ENCODE measurements at regions of chr11 and their contacts with region 1.

Region 1: GRCh38 chr11:94128746-94129511 is at the start of gene PANX1:
- DNase-seq: peak; percentile 85
- ATAC-seq: peak; percentile 80
- H3K4me3 ChIP-seq: peak within 1 kb of the TSS; percentile 88
- H3K27ac ChIP-seq: peak within 1 kb of the TSS; percentile 90
- H3K4me1 ChIP-seq: peaks cover 18% of the 10 kb centered on the region
- H3K27me3 ChIP-seq: no peaks in the 10 kb centered on the region
- CTCF ChIP-seq: no peak
- POLR2A ChIP-seq: peak; percentile 81
- RAD21 ChIP-seq: no peak
- total RNA-seq, gene PANX1: 70.3 and 70.8 TPM in 2 replicates

Region 2: GRCh38 chr11:93921695-93922468 is 207.0 kb before region 1 on chr11:
- CTCF ChIA-PET with region 1: no interaction called
- POLR2A ChIA-PET with region 1: no interaction called
- dilution Hi-C with region 1: no loop called
- in situ Hi-C with region 1: no loop called
- intact Hi-C with region 1: loop called (anchors 2 kb)
- DNase-seq: peak; percentile 72
- ATAC-seq: peak; percentile 96
- H3K4me3 ChIP-seq: no peak overlapping the region
- H3K27ac ChIP-seq: no peak overlapping the region
- H3K4me1 ChIP-seq: no peaks in the 10 kb centered on the region
- H3K27me3 ChIP-seq: peaks cover 7% of the 10 kb centered on the region
- CTCF ChIP-seq: peak; percentile 83
- POLR2A ChIP-seq: no peak
- RAD21 ChIP-seq: peak; percentile 92

Region 3: GRCh38 chr11:94171693-94172440 is 42.9 kb after region 1 on chr11:
- CTCF ChIA-PET with region 1: no interaction called
- POLR2A ChIA-PET with region 1: interaction called, 4 read pairs
- dilution Hi-C with region 1: no loop called
- in situ Hi-C with region 1: no loop called
- intact Hi-C with region 1: loop called (anchors 2 kb)
- DNase-seq: peak; percentile 50
- ATAC-seq: peak; percentile 41; the same call in 1 of the 2 replicates
- H3K4me3 ChIP-seq: no peak overlapping the region
- H3K27ac ChIP-seq: no peak overlapping the region
- H3K4me1 ChIP-seq: peaks cover 9% of the 10 kb centered on the region
- H3K27me3 ChIP-seq: no peaks in the 10 kb centered on the region
- CTCF ChIP-seq: peak; percentile 80
- POLR2A ChIP-seq: no peak
- RAD21 ChIP-seq: peak; percentile 81

Region 4: GRCh38 chr11:94767761-94768601 is 639.1 kb after region 1 on chr11 and contains the start of gene AMOTL1:
- CTCF ChIA-PET with region 1: no interaction called
- POLR2A ChIA-PET with region 1: no interaction called
- dilution Hi-C with region 1: no loop called
- in situ Hi-C with region 1: loop called (anchors 25 kb)
- intact Hi-C with region 1: no loop called
- DNase-seq: peak; percentile 76
- ATAC-seq: peak; percentile 90
- H3K4me3 ChIP-seq: peak within 1 kb of the TSS; percentile 98
- H3K27ac ChIP-seq: peak within 1 kb of the TSS; percentile 97
- H3K4me1 ChIP-seq: peaks cover 13% of the 10 kb centered on the region
- H3K27me3 ChIP-seq: no peaks in the 10 kb centered on the region
- CTCF ChIP-seq: no peak; the same call in 1 of the 2 replicates
- POLR2A ChIP-seq: no peak
- RAD21 ChIP-seq: peak; percentile 26; the same call in 1 of the 2 replicates
- total RNA-seq, gene AMOTL1: 49.5 and 58.6 TPM in 2 replicates